ENCODE measurements at regions of chr2 and their contacts with region 1.

Region 1: DNA sequence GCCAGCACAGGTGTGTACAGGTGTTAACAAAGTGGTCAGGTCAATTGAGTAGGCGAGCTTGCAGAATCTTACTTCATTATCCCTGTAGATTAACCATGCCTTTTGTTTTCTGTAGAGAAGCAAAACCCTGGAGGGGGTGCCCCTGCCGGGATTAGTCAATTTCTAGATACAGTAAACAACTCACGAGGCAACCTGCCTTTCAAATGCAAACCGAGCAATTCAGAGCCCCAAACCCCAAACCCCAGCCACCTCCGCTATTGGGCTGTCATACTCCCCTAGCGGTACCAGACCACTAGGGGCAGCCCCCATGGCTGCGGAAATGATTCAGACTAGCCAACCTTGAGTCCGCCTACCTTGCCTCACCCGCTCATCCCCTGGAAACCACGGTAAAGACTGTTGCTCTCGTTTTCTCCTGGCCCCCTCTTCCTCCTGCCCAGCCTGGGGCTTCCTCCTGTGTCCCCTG is 61.4 kb upstream of the KIF5C start:
- DNase-seq: no peak
- H3K4me3 ChIP-seq: no peak overlapping the region
- H3K27ac ChIP-seq: no peak overlapping the region
- H3K27me3 ChIP-seq: no peaks in the 10 kb centered on the region
- CTCF ChIP-seq: no peak

Region 2: GRCh38 chr2:149000158-149000938 is 186.7 kb after region 1 on chr2:
- intact Hi-C with region 1: loop called in 1 of 2 experiments (anchors 5 kb)
- DNase-seq: no peak
- H3K4me3 ChIP-seq: peak overlapping the region in 1 of 59 donors; percentile 8
- H3K27ac ChIP-seq: peak overlapping the region in 57 of 59 donors; percentile 3 to 93 (median 76)
- H3K27me3 ChIP-seq: no peaks in the 10 kb centered on the region
- CTCF ChIP-seq: no peak

Measured in dorsolateral prefrontal cortex (tissue), 120 donors.